IMR-90 (cell line): ENCODE measurements at regions of chr10 and their contacts with region 1.

Region 1: DNA sequence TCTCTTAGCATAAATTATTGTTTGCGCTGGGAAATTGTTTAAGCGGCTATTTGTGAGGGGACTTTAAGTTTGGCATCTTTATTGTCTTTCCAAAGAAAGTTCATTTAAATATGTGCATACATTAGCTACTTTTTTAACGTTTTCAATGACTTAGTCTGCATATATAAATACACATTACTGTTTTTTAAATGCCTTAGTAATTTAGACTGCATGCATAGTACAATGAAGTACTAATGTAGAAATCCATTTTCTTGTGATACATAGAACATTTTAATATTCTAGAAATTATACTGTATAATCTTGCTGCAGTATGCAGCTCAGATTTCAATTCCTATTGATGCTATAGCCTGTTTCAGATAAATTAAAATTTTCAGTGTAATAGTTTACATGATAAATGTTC is 325.4 kb downstream of the MALRD1 start:
- DNase-seq: no peak
- ATAC-seq: no peak
- H3K4me3 ChIP-seq: no peak overlapping the region
- H3K27ac ChIP-seq: no peak overlapping the region
- H3K4me1 ChIP-seq: no peaks in the 10 kb centered on the region
- H3K27me3 ChIP-seq: no peaks in the 10 kb centered on the region
- CTCF ChIP-seq: no peak
- POLR2A ChIP-seq: no peak
- RAD21 ChIP-seq: no peak

Region 2: DNA sequence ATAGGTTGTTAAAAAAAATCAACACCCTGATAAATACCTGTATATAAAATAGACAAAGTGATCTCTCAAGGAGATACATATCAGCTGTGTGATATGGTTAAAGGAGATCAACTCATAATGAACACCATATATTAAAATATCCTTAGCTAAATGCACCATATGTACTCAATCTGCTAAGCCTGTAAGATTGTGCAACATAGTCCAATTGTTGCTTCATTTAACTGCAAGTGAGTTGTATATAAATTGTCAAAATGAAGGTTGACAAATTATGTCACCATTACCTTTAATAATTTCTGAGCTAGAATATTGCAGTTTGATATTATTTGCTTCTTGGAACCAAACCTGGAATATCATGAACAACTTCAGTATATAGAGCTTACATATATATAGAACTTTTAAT is 41.7 kb before region 1 on chr10:
- CTCF ChIA-PET with region 1: no interaction called
- POLR2A ChIA-PET with region 1: no interaction called
- dilution Hi-C with region 1: no loop called
- in situ Hi-C with region 1: no loop called
- intact Hi-C with region 1: no loop called
- DNase-seq: peak; percentile 10
- ATAC-seq: no peak
- H3K4me3 ChIP-seq: no peak overlapping the region
- H3K27ac ChIP-seq: no peak overlapping the region
- H3K4me1 ChIP-seq: no peaks in the 10 kb centered on the region; the same call in 1 of the 2 replicates
- H3K27me3 ChIP-seq: no peaks in the 10 kb centered on the region
- CTCF ChIP-seq: no peak
- POLR2A ChIP-seq: no peak
- RAD21 ChIP-seq: no peak

Region 3: GRCh38 chr10:19549503-19549902 is 175.5 kb after region 1 on chr10:
- CTCF ChIA-PET with region 1: no interaction called
- POLR2A ChIA-PET with region 1: no interaction called
- dilution Hi-C with region 1: no loop called
- in situ Hi-C with region 1: no loop called
- intact Hi-C with region 1: loop called (anchors 1 kb)
- DNase-seq: peak; percentile 7
- ATAC-seq: no peak
- H3K4me3 ChIP-seq: no peak overlapping the region
- H3K27ac ChIP-seq: no peak overlapping the region
- H3K4me1 ChIP-seq: no peaks in the 10 kb centered on the region
- H3K27me3 ChIP-seq: no peaks in the 10 kb centered on the region
- CTCF ChIP-seq: no peak
- POLR2A ChIP-seq: no peak
- RAD21 ChIP-seq: no peak